CD8-positive, alpha-beta T cell (primary cell): ENCODE measurements at regions of chr6 and their contacts with region 1.

Region 1: DNA sequence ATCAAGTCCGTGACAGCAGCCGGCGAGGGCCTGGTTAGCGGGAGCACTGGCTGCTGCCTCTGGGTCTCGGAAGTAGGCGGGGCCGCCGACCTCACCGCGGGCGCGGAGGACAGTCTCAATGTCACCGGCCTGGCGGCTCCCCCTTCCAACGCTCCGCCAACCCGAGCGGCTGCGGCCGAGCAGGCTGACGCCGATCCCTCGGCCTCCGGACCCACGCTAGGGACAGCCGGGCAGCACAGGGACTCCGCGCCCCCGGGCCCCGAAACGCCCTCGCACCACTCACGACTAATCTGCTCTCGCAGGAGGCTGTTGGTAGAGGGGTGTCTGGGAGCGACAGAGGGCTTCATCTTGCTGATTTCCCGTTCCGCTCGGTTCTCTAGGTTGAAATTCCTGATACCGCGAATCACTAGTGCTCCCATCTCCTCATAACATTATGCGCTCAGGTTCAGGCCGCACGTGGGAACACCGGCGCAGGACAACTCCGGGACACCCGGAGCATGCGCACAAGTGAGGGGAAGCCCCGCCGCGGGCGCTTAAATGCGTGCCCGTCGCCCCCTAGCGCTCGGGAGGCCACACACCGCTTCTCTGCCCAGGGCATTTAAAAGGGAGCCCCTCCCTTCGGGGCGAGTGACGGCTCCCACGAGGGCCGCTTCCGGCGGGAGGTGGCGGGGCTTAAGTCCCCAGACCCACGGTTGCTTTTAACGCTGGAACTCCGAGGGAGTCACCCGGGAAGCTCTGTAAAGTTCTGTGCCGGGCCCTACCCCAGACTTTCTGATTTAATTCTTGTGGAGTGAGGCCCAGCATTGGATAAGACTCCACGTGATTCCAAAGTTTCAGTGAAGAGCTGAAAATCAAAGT is at the start of gene NDUFAF4:
- DNase-seq: peak; percentile 88 to 97 (median 95)
- ATAC-seq: peak; percentile 93
- H3K4me3 ChIP-seq: peak within 1 kb of the TSS; percentile 91 to 98
- H3K4me3 Mint-ChIP-seq: peak within 1 kb of the TSS; percentile 98
- H3K27ac ChIP-seq: peak within 1 kb of the TSS; percentile 91
- H3K27ac Mint-ChIP-seq: peak within 1 kb of the TSS; percentile 90
- H3K4me1 ChIP-seq: peaks cover 37% of the 10 kb centered on the region
- H3K4me1 Mint-ChIP-seq: peaks cover 39% of the 10 kb centered on the region
- H3K27me3 ChIP-seq: no peaks in the 10 kb centered on the region
- H3K27me3 Mint-ChIP-seq: peaks cover 6% of the 10 kb centered on the region
- CTCF ChIP-seq: peak; percentile 97
- total RNA-seq, gene NDUFAF4: 31.6 to 34.4 TPM

Region 2: GRCh38 chr6:95577304-95578105 is 1320.1 kb before region 1 on chr6 and contains the start of gene MANEA:
- CTCF ChIA-PET with region 1: no interaction called
- POLR2A ChIA-PET with region 1: no interaction called
- intact Hi-C with region 1: loop called (anchors 1 to 5 kb)
- DNase-seq: peak; percentile 69 to 91 (median 81)
- ATAC-seq: peak; percentile 84
- H3K4me3 ChIP-seq: peak within 1 kb of the TSS; percentile 70 to 89
- H3K4me3 Mint-ChIP-seq: peak within 1 kb of the TSS; percentile 94
- H3K27ac ChIP-seq: peak within 1 kb of the TSS; percentile 85 to 89
- H3K27ac Mint-ChIP-seq: peak within 1 kb of the TSS; percentile 98
- H3K4me1 ChIP-seq: peaks cover 30% of the 10 kb centered on the region
- H3K4me1 Mint-ChIP-seq: peaks cover 62% of the 10 kb centered on the region
- H3K27me3 ChIP-seq: no peaks in the 10 kb centered on the region
- H3K27me3 Mint-ChIP-seq: no peaks in the 10 kb centered on the region
- CTCF ChIP-seq: no peak
- total RNA-seq, gene MANEA: 5.3 to 6.0 TPM

Region 3: DNA sequence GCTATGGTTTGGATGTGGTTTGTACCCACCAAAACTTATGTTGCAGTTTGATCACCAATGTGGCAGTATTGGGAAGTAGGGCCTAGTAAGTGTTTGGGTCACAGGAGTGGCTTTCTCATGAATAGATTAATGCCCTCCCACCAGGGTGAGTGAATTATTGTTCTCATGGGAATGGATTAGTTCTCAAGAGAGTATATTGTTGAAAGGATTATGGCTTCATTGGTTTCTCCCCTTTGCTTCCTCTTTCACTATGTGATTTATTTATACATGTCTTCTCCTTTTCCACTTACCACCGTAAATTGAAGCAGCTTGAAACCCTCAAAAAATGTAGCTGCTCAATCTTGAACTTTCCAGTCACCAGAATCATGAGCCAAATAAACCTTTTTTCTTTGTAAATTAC is 365.2 kb before region 1 on chr6:
- CTCF ChIA-PET with region 1: interaction called, 3 read pairs
- POLR2A ChIA-PET with region 1: no interaction called
- intact Hi-C with region 1: loop called in 1 of 2 experiments (anchors 5 kb)
- DNase-seq: no peak
- ATAC-seq: no peak
- H3K4me3 ChIP-seq: no peak overlapping the region
- H3K4me3 Mint-ChIP-seq: no peak overlapping the region
- H3K27ac ChIP-seq: no peak overlapping the region
- H3K27ac Mint-ChIP-seq: no peak overlapping the region
- H3K4me1 ChIP-seq: peaks cover 4% of the 10 kb centered on the region
- H3K4me1 Mint-ChIP-seq: peaks cover 38% of the 10 kb centered on the region
- H3K27me3 ChIP-seq: no peaks in the 10 kb centered on the region
- H3K27me3 Mint-ChIP-seq: no peaks in the 10 kb centered on the region
- CTCF ChIP-seq: no peak

Region 4: DNA sequence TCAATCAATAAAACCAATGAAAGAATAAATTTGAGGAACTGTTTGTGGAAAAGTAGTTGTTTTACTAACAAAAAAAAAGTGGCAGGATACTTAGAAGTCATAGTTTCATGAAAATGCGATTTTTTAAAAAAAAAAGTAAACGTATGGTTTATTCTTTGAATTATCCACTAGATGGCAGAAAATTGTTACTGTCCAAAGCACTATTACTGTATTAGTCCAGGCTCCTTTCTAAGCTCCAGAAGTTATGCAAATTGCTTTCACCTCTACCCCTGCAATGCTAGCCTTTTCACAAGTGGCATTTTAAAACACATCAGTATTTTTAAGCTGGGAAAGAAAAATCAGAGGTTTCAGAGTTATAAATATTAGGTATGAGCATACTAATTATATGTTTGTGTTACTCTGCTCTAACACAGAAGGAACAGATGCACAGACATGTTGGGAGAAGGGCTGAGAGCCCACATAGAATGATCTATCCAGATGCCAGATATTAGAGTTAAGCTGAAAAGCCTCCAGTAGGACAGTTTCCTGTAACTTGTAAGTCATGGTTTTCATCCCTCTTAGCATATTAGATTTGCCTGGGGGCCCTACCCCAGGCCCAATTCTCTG is 270.8 kb before region 1 on chr6:
- CTCF ChIA-PET with region 1: no interaction called
- POLR2A ChIA-PET with region 1: no interaction called
- intact Hi-C with region 1: loop called in 1 of 2 experiments (anchors 10 kb)
- DNase-seq: peak in 2 of 9 experiments; percentile 15 to 35
- ATAC-seq: peak; percentile 36
- H3K4me3 ChIP-seq: no peak overlapping the region
- H3K4me3 Mint-ChIP-seq: no peak overlapping the region
- H3K27ac ChIP-seq: no peak overlapping the region
- H3K27ac Mint-ChIP-seq: no peak overlapping the region
- H3K4me1 ChIP-seq: no peaks in the 10 kb centered on the region
- H3K4me1 Mint-ChIP-seq: no peaks in the 10 kb centered on the region
- H3K27me3 ChIP-seq: no peaks in the 10 kb centered on the region
- H3K27me3 Mint-ChIP-seq: peaks cover 9% of the 10 kb centered on the region
- CTCF ChIP-seq: peak; percentile 44

Region 5: GRCh38 chr6:96923871-96924493 is 26.4 kb after region 1 on chr6:
- CTCF ChIA-PET with region 1: interaction called, 13 read pairs
- POLR2A ChIA-PET with region 1: interaction called, 17 read pairs
- intact Hi-C with region 1: loop called (anchors 1 kb)
- DNase-seq: peak in 3 of 9 experiments; percentile 1 to 83 (median 75)
- ATAC-seq: no peak
- H3K4me3 ChIP-seq: peak overlapping the region; percentile 64 to 76
- H3K4me3 Mint-ChIP-seq: peak overlapping the region; percentile 96
- H3K27ac ChIP-seq: peak overlapping the region; percentile 92 to 96
- H3K27ac Mint-ChIP-seq: peak overlapping the region; percentile 98
- H3K4me1 ChIP-seq: peaks cover 32% of the 10 kb centered on the region
- H3K4me1 Mint-ChIP-seq: peaks cover 32% of the 10 kb centered on the region
- H3K27me3 ChIP-seq: no peaks in the 10 kb centered on the region
- H3K27me3 Mint-ChIP-seq: no peaks in the 10 kb centered on the region
- CTCF ChIP-seq: no peak

Region 6: DNA sequence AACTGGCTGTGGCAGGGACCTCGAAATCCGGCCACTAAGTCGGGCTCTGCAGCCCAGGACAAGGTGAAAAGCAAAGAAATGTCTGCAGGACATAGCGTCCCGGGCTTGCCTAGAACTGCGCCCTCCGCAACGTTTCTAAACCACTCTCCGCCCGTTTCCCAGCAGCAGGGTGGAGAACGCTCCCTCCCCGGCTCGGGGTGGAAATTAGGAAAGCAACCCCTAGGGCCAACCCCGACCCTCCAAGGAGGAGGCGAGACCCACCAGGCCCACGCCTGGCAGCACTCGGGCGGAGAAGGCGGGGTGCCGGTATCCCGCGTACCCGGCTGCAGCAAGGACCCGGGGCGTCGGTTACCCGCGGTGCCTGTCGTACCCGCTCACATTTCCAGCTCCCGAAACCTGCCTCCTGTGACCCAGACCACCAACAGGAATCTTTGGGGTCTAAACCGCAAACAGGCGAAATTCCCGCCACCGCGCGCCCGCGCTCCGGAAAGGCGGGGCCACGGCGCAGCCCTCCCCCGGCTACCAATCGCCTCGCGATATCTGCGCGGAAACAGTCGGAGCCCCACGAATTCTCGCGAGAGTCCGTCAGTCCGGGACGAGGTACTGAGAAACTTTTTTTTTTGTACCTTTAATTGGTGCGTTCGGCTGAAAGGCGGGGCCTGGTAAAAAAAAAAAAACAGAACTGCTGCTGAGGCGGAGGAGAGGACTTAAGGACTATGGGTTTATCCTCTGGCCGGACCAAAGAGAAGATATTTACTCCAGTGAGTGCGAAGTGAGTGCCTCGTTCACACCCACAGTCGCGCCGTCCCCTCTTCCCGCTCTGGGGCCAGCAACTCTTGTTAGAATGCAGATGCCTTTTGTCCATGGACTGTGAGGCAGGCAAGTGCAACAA is 385.4 kb after region 1 on chr6 and contains the start of gene MMS22L:
- CTCF ChIA-PET with region 1: interaction called, 4 read pairs
- POLR2A ChIA-PET with region 1: no interaction called
- intact Hi-C with region 1: loop called (anchors 1 to 2 kb)
- DNase-seq: peak; percentile 80 to 97 (median 91)
- ATAC-seq: peak; percentile 98
- H3K4me3 ChIP-seq: peak within 1 kb of the TSS; percentile 61 to 94
- H3K4me3 Mint-ChIP-seq: peak within 1 kb of the TSS; percentile 95
- H3K27ac ChIP-seq: peak within 1 kb of the TSS; percentile 53 to 58
- H3K27ac Mint-ChIP-seq: peak within 1 kb of the TSS; percentile 89
- H3K4me1 ChIP-seq: peaks cover 8% of the 10 kb centered on the region
- H3K4me1 Mint-ChIP-seq: peaks cover 33% of the 10 kb centered on the region
- H3K27me3 ChIP-seq: no peaks in the 10 kb centered on the region
- H3K27me3 Mint-ChIP-seq: no peaks in the 10 kb centered on the region
- CTCF ChIP-seq: no peak
- total RNA-seq, gene MMS22L: 3.1 to 3.3 TPM